Cardiac septum (tissue), 1 donor: ENCODE measurements at regions of chr2 and their contacts with region 1.

Region 1: DNA sequence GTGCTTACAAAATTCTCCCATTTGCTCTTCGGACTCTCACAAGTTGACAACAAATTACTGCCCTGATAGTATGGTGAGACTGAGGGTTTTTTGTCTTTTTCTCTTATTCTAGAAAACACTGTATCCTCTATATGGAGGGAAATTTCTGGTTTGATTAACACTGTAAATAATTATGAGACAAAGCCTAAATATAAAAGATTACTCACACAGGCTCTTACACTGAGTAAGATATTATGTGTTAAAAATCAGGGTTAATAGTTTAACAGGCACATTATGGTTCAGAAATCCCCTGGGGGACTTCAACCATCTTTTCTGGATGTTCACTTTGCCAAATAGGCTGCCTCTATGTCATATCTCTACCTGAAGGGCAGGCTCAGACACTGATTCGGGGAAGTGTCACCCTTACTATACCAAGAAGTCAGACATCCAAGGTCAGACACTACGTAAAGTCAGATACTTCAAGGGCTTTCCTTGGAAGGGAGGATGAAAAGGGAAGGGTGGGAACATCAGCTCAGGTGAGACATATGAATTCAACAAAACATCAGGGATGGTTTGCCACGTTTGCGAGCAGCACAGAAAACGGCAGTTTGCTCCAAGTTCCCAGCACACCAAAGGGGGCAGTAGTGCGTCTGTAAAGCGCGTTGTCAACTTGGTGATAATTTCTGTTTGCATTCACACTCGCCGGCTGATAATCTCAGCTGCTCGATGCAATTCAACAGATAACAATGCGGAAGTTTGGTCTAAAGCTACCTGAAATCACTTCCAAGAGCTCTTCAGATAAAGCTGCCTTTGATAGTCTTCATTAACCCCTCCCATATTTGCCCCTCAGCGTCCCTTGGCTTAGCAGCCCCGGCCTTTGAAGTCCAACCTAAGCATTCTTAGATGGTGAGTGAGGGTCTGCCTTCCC is 972 bp upstream of the RASGRP3 start:
- DNase-seq: peak; percentile 86

Region 2: GRCh38 chr2:32963941-32964340 is 511.5 kb before region 1 on chr2:
- intact Hi-C with region 1: no loop called
- DNase-seq: no peak

Region 3: GRCh38 chr2:33236482-33237385 is 238.7 kb before region 1 on chr2:
- intact Hi-C with region 1: no loop called
- DNase-seq: no peak

Region 4: GRCh38 chr2:33426666-33427231 is 48.7 kb before region 1 on chr2:
- intact Hi-C with region 1: no loop called
- DNase-seq: peak; percentile 77

Region 5: DNA sequence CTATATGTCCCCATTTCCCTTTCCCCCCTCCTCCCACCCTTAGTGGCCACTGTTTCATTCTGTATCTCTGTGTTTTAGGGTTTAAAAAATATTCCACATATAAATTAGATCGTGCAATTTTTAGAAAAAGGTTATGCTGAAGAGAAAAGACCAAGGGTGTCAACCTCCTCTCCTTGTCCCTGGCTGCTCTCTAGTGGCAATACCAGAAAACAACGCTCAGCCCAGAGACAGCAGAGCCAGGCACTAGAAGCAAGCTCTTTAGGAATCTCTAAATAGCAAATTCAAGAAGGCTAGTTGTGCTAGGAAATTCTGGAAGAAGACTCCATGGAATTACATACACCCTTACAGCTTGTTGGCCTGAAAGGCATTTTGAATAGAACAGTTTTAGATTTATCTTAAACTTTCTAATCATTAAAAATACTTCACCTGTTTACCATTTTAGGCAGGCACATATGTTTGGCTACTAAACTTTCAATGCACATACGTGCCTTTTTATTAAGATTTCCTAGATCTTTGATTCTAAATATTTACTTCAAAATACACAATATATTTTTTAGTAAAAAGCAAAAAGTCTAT is 34.2 kb before region 1 on chr2:
- intact Hi-C with region 1: loop called (anchors 5 kb)
- DNase-seq: no peak

Region 6: DNA sequence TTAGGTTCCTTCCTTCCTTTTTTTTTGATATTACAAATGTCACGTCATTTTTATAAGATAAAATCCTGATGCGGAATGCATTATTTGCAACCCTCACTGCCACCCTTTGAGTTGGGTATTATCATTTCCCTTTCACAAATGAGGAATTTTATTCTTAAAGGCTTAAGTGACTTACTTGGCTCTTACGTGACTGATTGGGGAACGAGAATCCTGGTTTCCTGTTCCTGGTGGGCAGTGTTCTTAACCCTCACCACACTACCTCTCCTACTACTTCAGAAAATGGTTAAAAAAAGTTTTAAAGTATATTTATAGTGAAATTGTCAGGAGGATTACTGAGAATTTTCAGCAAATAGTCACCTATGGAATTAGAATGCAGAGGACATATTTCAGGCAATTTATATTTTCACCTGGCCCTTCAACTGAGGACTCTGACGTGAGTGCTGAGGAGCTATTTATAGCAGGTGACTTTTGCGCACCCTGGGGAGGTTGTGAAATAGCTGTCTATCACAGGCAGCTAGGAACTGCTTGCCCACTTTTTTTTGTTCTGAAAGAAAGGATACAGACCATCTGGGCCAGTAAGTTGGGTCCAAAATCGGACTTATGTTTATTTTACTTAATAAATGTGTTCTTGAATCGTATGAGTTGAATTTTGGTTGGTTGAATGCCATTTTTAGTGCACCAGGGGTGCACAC is 17.8 kb before region 1 on chr2:
- intact Hi-C with region 1: loop called (anchors 2 kb)
- DNase-seq: no peak

Region 7: GRCh38 chr2:33535421-33535820 is 59.9 kb after region 1 on chr2:
- intact Hi-C with region 1: loop called (anchors 2 kb)
- DNase-seq: no peak

Region 8: DNA sequence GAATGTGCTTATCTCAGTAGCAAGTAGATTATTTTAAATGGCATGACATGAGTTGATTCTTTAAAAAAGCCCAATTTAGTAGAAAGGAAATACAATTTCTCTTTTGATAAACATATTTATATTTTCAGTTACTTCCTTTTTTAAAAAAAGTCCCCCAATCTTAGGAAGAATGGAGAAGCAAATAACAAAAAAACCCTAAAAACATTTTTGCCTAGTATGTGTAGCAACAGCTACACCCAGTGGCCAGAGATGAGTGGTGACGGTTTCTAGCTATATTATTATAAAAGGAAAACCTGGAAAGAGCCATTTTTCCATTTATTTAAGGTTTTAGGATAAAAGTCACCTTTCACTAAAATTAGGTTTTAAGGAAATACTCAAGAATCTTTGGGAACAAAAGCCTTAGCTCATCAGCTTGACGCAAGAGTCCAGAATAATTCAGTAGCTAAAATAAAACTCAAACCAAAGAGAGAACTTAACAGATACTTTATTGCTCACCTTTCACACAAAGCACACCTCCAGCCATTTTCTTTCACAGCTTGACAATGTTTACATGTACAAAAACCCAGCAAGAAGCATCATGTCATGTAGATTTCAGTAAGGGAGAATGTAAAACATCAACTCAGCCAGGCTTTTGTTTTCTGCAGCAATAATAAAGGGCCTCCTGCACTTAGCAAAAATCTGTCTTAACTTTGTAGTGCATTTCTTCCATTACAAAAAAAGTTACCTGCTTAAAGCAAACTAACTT is 107.9 kb after region 1 on chr2:
- intact Hi-C with region 1: loop called (anchors 5 kb)
- DNase-seq: no peak

Region 9: GRCh38 chr2:33599175-33599942 is 123.9 kb after region 1 on chr2 and contains the start of gene FAM98A:
- intact Hi-C with region 1: loop called (anchors 5 kb)
- DNase-seq: peak; percentile 99
- total RNA-seq, gene FAM98A: 86.8 TPM

Region 10: GRCh38 chr2:34069604-34070003 is 594.1 kb after region 1 on chr2:
- intact Hi-C with region 1: no loop called
- DNase-seq: no peak